ENCODE measurements at regions of chr5 and their contacts with region 1.

Region 1: DNA sequence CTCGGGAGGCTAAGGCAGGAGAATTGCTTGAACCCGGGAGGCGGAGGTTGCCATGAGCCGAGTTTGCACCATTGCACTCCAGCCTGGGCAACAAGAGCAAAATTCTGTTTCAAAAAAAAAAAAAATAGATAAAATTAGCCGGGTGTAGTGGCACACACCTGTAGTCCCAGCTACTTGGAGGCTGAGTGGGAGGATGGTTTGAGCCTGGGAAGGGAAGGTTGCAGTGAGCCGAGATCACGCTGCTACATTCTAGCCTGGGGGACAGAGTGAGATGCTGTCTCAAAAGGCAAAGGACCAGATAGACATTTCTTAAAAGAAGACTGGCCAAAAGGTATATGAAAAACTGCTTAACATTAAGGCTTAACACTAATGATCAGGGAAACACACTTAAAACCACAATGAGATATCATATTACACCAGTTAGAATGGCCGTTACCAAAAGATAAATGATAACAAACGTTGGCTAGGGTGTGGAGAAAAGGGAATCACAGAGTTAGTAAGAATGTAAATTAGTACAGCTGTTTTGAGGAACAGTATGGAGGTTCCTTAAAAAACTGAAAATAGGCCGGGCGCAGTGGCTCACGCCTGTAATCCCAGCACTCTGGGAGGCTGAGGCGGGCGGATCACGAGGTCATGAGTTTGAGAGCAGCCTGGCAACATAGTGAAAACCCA is 10.1 kb upstream of the MARVELD2 start:
- DNase-seq: no peak
- ATAC-seq: no peak
- H3K4me3 ChIP-seq: no peak overlapping the region
- H3K27ac ChIP-seq: no peak overlapping the region
- H3K4me1 ChIP-seq: no peaks in the 10 kb centered on the region
- H3K27me3 ChIP-seq: no peaks in the 10 kb centered on the region
- CTCF ChIP-seq: no peak

Region 2: GRCh38 chr5:69261034-69261433 is 143.8 kb before region 1 on chr5:
- CTCF ChIA-PET with region 1: no interaction called
- POLR2A ChIA-PET with region 1: no interaction called
- intact Hi-C with region 1: no loop called
- DNase-seq: peak; percentile 19
- ATAC-seq: peak; percentile 80
- H3K4me3 ChIP-seq: no peak overlapping the region
- H3K27ac ChIP-seq: 0 out of 2 replicates have a peak overlapping the region, but pooled peaks have one; percentile 25
- H3K4me1 ChIP-seq: no peaks in the 10 kb centered on the region; the same call in none of the 2 replicates
- H3K27me3 ChIP-seq: no peaks in the 10 kb centered on the region
- CTCF ChIP-seq: no peak

Region 3: GRCh38 chr5:69300537-69301203 is 104.1 kb before region 1 on chr5:
- CTCF ChIA-PET with region 1: no interaction called
- POLR2A ChIA-PET with region 1: no interaction called
- intact Hi-C with region 1: no loop called
- DNase-seq: no peak
- ATAC-seq: no peak
- H3K4me3 ChIP-seq: no peak overlapping the region
- H3K27ac ChIP-seq: no peak overlapping the region
- H3K4me1 ChIP-seq: no peaks in the 10 kb centered on the region
- H3K27me3 ChIP-seq: no peaks in the 10 kb centered on the region
- CTCF ChIP-seq: no peak

Region 4: DNA sequence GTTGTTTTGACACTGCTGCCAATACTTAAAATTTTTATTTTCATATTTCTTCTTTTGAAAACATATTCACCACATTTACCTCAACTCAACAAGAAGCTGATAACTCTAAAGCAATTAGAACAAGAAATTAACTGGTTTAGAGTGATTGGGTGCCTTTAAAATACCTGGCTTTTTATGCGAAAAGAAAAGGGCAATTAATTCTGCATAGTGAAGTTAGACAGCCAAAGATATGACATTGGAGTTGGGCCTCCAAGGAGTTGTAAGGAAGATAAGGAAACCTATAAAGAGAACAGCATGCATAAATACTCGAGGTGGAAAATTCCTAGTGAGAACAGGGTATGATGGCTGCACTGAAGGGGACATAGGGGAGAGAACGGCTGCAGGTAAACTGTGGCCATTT is 45.1 kb before region 1 on chr5:
- CTCF ChIA-PET with region 1: no interaction called
- POLR2A ChIA-PET with region 1: no interaction called
- intact Hi-C with region 1: loop called (anchors 10 kb)
- DNase-seq: no peak
- ATAC-seq: no peak
- H3K4me3 ChIP-seq: no peak overlapping the region
- H3K27ac ChIP-seq: no peak overlapping the region
- H3K4me1 ChIP-seq: no peaks in the 10 kb centered on the region
- H3K27me3 ChIP-seq: no peaks in the 10 kb centered on the region
- CTCF ChIP-seq: no peak

Region 5: GRCh38 chr5:69517763-69518212 is 113.0 kb after region 1 on chr5:
- CTCF ChIA-PET with region 1: interaction called, 14 read pairs
- POLR2A ChIA-PET with region 1: no interaction called
- intact Hi-C with region 1: no loop called
- DNase-seq: peak; percentile 79
- ATAC-seq: peak; percentile 52
- H3K4me3 ChIP-seq: peak overlapping the region; percentile 38; the same call in 1 of the 2 replicates
- H3K27ac ChIP-seq: peak overlapping the region; percentile 98
- H3K4me1 ChIP-seq: peaks cover 66% of the 10 kb centered on the region
- H3K27me3 ChIP-seq: no peaks in the 10 kb centered on the region
- CTCF ChIP-seq: no peak

Measured in PC-3 (cell line).